ENCODE measurements at regions of chr13 and their contacts with region 1.

Region 1: GRCh38 chr13:77026818-77027585 is at the start of gene FBXL3:
- DNase-seq: peak; percentile 84 to 87
- ATAC-seq: peak; percentile 87 to 95 (median 91)
- H3K4me3 ChIP-seq: peak within 1 kb of the TSS; percentile 70 to 100 (median 92)
- H3K27ac ChIP-seq: peak within 1 kb of the TSS; percentile 96 to 100 (median 99)
- H3K4me1 ChIP-seq: peaks cover 4 to 59% (median 48%) of the 10 kb centered on the region in 9 donors
- H3K27me3 ChIP-seq: no peaks in the 10 kb centered on the region
- CTCF ChIP-seq: no peak
- total RNA-seq, gene FBXL3: 26.3 to 41.7 (median 29.2) TPM

Region 2: GRCh38 chr13:76937281-76937820 is 89.7 kb before region 1 on chr13:
- intact Hi-C with region 1: no loop called
- DNase-seq: no peak
- ATAC-seq: peak in 1 of 8 donors; percentile 57
- H3K4me3 ChIP-seq: no peak overlapping the region
- H3K27ac ChIP-seq: peak overlapping the region in 1 of 10 donors; percentile 63
- H3K4me1 ChIP-seq: peaks cover 0 to 18% (median 0%) of the 10 kb centered on the region in 9 donors
- H3K27me3 ChIP-seq: no peaks in the 10 kb centered on the region
- CTCF ChIP-seq: no peak

Region 3: DNA sequence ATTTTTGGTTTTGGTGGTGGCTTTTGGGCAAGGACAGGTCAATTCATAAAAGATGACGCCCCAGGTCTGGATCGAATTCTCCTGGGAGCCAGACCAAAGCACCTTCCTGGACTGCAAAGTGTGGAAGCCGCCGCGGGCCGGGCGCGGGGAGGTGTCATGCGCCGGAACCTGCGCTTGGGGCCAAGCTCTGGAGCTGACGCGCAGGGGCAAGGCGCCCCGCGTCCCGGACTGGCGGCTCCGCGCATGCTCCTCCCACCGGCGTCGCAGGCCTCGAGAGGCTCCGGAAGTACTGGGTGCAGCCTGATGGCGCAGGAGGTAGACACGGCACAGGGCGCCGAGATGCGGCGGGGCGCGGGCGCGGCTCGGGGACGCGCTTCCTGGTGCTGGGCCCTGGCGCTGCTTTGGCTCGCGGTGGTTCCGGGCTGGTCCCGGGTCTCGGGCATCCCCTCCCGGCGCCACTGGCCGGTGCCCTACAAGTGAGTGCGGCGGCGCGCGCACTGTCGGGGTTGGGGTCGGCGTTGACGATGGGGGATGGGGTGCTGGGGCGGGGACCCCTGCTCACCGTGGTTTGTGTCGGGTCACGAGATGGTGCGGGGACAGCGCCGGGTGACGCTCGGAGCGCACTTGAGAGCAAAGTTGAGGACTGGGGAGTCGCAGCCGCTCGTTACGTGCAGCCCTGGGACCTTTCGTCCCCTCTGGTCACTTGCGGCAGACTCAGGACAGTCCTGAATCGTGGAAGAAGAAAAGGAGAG is 35.0 kb before region 1 on chr13 and contains the start of gene CLN5:
- intact Hi-C with region 1: loop called in 1 of 10 experiments (anchors 5 kb)
- DNase-seq: peak; percentile 92 to 95
- ATAC-seq: peak; percentile 98 to 99 (median 98)
- H3K4me3 ChIP-seq: peak within 1 kb of the TSS; percentile 70 to 90 (median 80)
- H3K27ac ChIP-seq: peak within 1 kb of the TSS; percentile 79 to 96 (median 91)
- H3K4me1 ChIP-seq: peaks cover 0 to 26% (median 21%) of the 10 kb centered on the region in 9 donors
- H3K27me3 ChIP-seq: no peaks in the 10 kb centered on the region
- CTCF ChIP-seq: peak in 2 of 9 donors; percentile 3 to 13
- total RNA-seq, gene CLN5: 10.5 to 22.3 (median 16.0) TPM

Region 4: GRCh38 chr13:77124423-77124822 is 97.4 kb after region 1 on chr13:
- intact Hi-C with region 1: no loop called
- DNase-seq: no peak
- ATAC-seq: no peak
- H3K4me3 ChIP-seq: no peak overlapping the region
- H3K27ac ChIP-seq: no peak overlapping the region
- H3K4me1 ChIP-seq: peaks cover 0 to 12% (median 0%) of the 10 kb centered on the region in 9 donors
- H3K27me3 ChIP-seq: no peaks in the 10 kb centered on the region
- CTCF ChIP-seq: no peak

Region 5: DNA sequence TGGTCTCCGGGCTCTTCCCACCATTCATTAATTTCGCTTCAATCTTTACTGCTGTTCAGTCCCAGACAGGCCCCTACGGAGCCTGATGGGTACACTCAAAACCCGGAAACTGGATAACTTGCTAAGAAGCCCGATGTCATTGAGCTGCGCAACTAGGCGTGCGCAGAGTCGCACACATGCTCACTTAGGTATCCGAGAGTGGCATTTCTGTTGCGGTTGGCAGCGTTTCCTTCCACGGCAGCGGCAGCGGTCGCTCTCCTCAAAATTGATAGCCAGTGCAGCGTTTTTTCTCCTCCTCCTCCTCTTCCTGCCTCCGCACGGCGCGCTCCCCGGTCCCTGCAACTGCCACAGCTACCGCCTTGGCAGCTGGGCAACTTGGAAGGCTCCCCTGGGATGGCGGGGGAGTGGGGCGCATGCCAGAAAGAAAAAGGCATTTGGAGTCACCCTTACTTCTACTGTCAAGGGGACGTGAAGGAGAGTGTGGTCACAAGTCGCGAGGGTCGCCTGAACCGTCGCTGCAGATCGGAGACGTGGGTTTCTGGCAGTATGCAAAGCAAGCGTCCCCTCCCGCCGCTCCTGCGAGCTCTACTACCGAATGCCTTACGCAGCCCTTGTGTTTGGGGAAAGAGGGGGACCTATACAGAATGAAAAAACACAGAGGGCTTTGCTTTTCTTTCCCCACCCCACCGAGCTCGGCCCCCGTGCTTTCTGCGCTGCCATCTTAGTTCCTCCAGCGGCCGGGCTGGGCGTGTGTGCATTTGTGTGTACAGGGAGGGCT is 302.3 kb after region 1 on chr13:
- intact Hi-C with region 1: loop called in 1 of 10 experiments (anchors 5 kb)
- DNase-seq: peak; percentile 75 to 86
- ATAC-seq: peak; percentile 74 to 88 (median 86)
- H3K4me3 ChIP-seq: peak overlapping the region; percentile 68 to 97 (median 82)
- H3K27ac ChIP-seq: peak overlapping the region; percentile 70 to 94 (median 87)
- H3K4me1 ChIP-seq: peaks cover 0 to 40% (median 29%) of the 10 kb centered on the region in 9 donors
- H3K27me3 ChIP-seq: no peaks in the 10 kb centered on the region
- CTCF ChIP-seq: peak in 2 of 9 donors; percentile 8 to 12

Region 6: GRCh38 chr13:77620138-77620537 is 593.1 kb after region 1 on chr13:
- intact Hi-C with region 1: no loop called
- DNase-seq: no peak
- ATAC-seq: no peak
- H3K4me3 ChIP-seq: no peak overlapping the region
- H3K27ac ChIP-seq: no peak overlapping the region
- H3K4me1 ChIP-seq: no peaks in the 10 kb centered on the region
- H3K27me3 ChIP-seq: peaks cover 0 to 9% (median 0%) of the 10 kb centered on the region in 7 donors
- CTCF ChIP-seq: no peak